MCF 10A (cell line): ENCODE measurements at regions of chr16 and their contacts with region 1.

Region 1: GRCh38 chr16:11094072-11094856 is 149.9 kb downstream of the CLEC16A start:
- DNase-seq: peak; percentile 11
- H3K4me3 Mint-ChIP-seq: no peak overlapping the region
- H3K27ac Mint-ChIP-seq: peak overlapping the region; percentile 23
- H3K4me1 Mint-ChIP-seq: peaks cover 14% of the 10 kb centered on the region
- H3K27me3 Mint-ChIP-seq: no peaks in the 10 kb centered on the region
- CTCF ChIP-seq: no peak

Region 2: DNA sequence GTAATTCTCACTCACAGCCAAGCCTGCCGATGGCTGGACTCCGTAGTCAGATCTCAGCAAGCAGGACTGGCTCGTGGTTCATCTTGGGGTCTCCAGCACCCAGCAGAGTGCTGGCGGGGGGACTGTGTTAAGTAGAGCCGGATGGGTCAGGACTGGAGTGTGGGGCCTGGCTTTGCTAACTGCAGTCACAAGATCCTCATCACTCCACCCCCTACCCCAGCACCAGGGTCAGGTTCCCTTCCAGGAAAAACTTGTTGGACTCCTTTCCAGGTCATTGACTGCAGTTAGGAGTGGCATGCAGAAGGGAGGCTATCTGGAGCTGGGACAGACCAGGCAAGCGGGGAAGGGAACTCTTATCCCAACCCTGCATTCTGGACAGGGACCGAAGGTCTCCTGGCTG is 211.3 kb before region 1 on chr16:
- CTCF ChIA-PET with region 1: no interaction called
- POLR2A ChIA-PET with region 1: no interaction called
- intact Hi-C with region 1: loop called (anchors 5 kb)
- DNase-seq: no peak
- H3K4me3 Mint-ChIP-seq: no peak overlapping the region
- H3K27ac Mint-ChIP-seq: no peak overlapping the region
- H3K4me1 Mint-ChIP-seq: no peaks in the 10 kb centered on the region
- H3K27me3 Mint-ChIP-seq: peaks cover 39% of the 10 kb centered on the region
- CTCF ChIP-seq: no peak

Region 3: DNA sequence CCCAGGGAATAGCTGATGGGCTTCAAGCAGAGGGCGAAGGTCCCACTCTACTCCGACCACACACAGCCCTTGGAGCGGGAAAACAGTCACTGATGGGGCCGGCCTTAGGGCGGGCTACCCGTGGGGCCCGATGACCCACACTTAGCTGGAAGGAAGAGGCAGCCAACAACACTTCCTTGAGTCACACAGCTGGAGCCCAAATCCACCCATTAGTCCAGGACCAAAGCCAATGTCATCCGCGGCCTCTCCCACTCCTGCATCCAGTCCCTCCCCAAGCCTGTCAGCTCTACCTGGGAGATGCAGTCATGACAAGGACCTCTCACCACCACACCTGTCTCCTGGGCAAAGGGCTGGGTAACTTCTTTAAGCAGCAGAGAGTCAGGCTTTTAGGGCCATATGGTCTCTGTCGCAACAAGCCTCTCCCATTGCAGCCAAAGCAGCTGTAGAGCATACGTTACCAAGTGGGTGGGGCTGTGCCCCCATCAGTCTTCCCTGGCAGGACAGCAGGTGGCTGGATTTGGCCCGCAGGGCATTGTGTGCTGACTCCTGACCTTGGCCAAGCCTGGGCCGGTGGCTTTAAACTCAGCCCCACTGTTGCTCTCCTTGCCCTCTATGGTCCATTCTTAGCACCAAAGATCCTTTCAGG is 51.0 kb after region 1 on chr16:
- CTCF ChIA-PET with region 1: no interaction called
- POLR2A ChIA-PET with region 1: no interaction called
- intact Hi-C with region 1: no loop called
- DNase-seq: no peak
- H3K4me3 Mint-ChIP-seq: no peak overlapping the region
- H3K27ac Mint-ChIP-seq: no peak overlapping the region
- H3K4me1 Mint-ChIP-seq: no peaks in the 10 kb centered on the region
- H3K27me3 Mint-ChIP-seq: no peaks in the 10 kb centered on the region
- CTCF ChIP-seq: no peak

Region 4: DNA sequence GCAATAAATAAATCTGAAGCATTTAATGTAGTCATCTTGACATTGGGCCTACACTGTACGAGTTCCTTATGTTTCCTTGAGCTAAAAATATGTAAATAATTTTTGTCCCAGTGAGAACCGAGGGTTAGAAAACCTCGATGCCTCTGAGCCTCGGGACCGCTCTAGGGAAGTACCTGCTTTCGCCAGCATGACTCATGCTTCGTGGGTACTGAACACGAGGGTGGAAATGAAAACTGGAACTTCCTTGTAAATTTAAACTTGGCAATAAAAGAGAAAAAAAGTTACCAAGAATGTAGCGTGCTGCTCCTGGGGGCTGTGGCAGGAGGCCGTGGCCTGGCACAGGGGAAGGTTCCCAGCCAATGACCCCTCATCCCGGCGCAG is 87.6 kb after region 1 on chr16:
- CTCF ChIA-PET with region 1: no interaction called
- POLR2A ChIA-PET with region 1: no interaction called
- intact Hi-C with region 1: no loop called
- DNase-seq: no peak
- H3K4me3 Mint-ChIP-seq: no peak overlapping the region
- H3K27ac Mint-ChIP-seq: no peak overlapping the region
- H3K4me1 Mint-ChIP-seq: peaks cover 8% of the 10 kb centered on the region
- H3K27me3 Mint-ChIP-seq: no peaks in the 10 kb centered on the region
- CTCF ChIP-seq: no peak

Region 5: DNA sequence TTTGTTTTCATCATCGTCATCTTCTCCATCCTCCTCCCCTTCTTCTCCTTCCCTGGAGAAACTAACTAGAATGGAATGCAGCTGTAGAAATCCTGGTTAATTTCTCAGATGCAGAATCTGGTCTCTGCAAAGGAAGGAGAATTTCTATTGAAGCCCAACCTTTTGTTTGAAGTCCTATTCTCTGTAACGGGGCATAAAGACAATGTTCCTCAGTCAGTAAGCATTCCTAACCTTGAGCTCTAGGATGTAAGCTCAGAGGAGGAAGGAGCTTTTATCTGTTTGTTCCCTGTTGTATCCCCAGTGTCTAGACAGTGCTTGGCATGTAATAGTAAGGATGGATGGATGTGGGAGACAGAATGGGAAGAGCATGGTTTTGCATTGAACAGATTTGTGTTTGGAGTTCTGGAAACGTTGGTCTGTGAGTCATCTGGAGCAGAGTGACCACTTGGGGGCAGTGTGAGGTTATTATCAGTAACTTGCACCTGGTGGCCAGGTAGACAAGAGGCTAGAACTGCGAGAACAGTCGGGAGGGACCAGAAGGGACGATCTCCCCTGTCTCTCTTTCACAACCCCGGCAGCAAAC is 1246.0 kb after region 1 on chr16:
- CTCF ChIA-PET with region 1: no interaction called
- POLR2A ChIA-PET with region 1: no interaction called
- intact Hi-C with region 1: no loop called
- DNase-seq: peak; percentile 54
- H3K4me3 Mint-ChIP-seq: no peak overlapping the region
- H3K27ac Mint-ChIP-seq: no peak overlapping the region
- H3K4me1 Mint-ChIP-seq: peaks cover 9% of the 10 kb centered on the region
- H3K27me3 Mint-ChIP-seq: no peaks in the 10 kb centered on the region
- CTCF ChIP-seq: peak; percentile 32